ENCODE measurements at regions of chr5 and their contacts with region 1.

Region 1: DNA sequence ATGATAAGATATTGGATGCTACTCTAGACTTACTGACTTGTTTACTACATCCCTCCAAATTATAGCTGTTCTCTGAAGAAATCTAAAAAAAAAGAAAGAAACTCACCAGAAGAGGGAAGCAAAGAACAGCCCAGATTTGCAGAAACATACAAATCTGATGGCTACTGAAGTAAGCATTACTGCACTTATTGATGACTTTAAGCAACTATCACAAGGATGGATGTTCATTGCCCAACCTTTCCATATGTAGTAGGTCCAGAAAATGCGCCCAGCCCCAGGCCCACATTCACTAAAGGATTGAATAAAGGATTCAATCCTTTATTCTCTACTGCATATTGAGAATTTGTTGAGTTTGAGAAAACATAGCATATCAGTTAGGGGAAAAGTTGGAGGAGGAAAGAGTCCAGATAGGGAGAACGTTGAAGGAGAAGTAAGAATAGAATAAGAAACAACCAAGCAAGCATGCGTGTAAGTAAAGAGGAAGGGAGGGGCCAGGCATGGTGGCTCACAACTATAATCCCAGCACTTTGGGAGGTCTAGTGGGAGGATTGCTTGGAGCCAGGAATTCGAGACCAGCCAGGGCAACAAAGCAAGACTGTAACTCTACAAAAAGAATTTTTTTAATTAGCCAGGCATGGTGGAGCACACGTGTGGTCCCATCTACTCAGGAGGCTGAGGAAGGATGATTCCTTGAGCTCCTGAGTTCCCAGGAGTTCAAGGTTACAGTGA is 33.8 kb upstream of the DTWD2 start:
- DNase-seq: peak in 1 of 35 experiments; percentile 56
- ATAC-seq: peak; percentile 31 to 55 (median 48)
- H3K4me3 ChIP-seq: no peak overlapping the region
- H3K4me3 Mint-ChIP-seq: no peak overlapping the region
- H3K27ac ChIP-seq: no peak overlapping the region
- H3K27ac Mint-ChIP-seq: peak overlapping the region in 1 of 2 donors; percentile 59
- H3K4me1 ChIP-seq: no peaks in the 10 kb centered on the region
- H3K4me1 Mint-ChIP-seq: peaks cover 5 to 7% (median 5%) of the 10 kb centered on the region in 3 donors
- H3K27me3 ChIP-seq: no peaks in the 10 kb centered on the region
- H3K27me3 Mint-ChIP-seq: no peaks in the 10 kb centered on the region

Region 2: DNA sequence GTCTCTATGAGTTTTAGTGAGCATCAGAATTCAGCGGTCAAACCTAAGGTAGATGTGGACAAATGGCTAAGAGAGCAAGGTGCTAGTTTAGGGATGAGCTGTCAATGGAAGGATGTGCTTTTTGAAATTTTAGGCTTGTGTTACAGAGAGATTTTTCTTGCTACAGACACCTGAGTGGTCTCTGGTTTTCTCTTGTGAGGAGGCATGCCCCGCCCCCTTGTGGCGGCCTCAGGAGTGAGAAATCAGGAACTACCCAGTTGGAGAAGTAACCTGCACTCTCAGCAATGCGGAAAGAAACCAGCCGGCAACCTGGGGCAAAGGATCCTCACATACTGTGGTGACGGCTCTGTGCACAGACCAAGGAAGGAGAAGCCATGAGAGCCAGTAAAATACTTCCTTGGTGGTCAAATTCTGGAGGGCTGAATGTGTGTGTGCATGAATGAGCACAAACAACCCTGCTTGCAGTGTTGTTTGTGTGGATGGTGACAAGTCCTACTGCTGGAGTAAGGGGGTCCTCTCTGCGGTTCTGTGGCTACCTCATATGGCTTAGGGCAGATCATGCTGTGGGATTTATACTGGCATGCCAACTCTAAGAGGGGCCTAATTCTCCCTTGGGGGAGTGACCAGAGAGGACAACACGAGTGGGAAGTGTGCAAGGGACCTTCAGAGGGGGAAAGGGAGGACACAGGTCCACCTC is 413.4 kb after region 1 on chr5:
- CTCF ChIA-PET with region 1: interaction called in 1 of 2 experiments, 10 read pairs
- POLR2A ChIA-PET with region 1: no interaction called
- DNase-seq: peak; percentile 37 to 79 (median 68)
- ATAC-seq: peak; percentile 76 to 81 (median 79)
- H3K4me3 ChIP-seq: no peak overlapping the region
- H3K4me3 Mint-ChIP-seq: no peak overlapping the region
- H3K27ac ChIP-seq: no peak overlapping the region
- H3K27ac Mint-ChIP-seq: no peak overlapping the region
- H3K4me1 ChIP-seq: peaks cover 0 to 4% of the 10 kb centered on the region in 2 experiments
- H3K4me1 Mint-ChIP-seq: peaks cover 7 to 17% (median 9%) of the 10 kb centered on the region in 3 donors
- H3K27me3 ChIP-seq: peaks cover 0 to 22% of the 10 kb centered on the region in 2 experiments
- H3K27me3 Mint-ChIP-seq: peaks cover 16 to 39% of the 10 kb centered on the region in 2 donors